Thyroid gland (tissue), 4 donors: ENCODE measurements at regions of chr7 and their contacts with region 1.

Region 1: GRCh38 chr7:135795846-135796570 is 47.4 kb upstream of the FAM180A start:
- DNase-seq: no peak
- H3K4me3 ChIP-seq: no peak overlapping the region
- H3K27ac ChIP-seq: peak overlapping the region; percentile 27 to 66 (median 51)
- H3K4me1 ChIP-seq: peaks cover 19 to 34% of the 10 kb centered on the region in 2 donors
- H3K27me3 ChIP-seq: no peaks in the 10 kb centered on the region
- CTCF ChIP-seq: no peak
- POLR2A ChIP-seq: no peak

Region 2: DNA sequence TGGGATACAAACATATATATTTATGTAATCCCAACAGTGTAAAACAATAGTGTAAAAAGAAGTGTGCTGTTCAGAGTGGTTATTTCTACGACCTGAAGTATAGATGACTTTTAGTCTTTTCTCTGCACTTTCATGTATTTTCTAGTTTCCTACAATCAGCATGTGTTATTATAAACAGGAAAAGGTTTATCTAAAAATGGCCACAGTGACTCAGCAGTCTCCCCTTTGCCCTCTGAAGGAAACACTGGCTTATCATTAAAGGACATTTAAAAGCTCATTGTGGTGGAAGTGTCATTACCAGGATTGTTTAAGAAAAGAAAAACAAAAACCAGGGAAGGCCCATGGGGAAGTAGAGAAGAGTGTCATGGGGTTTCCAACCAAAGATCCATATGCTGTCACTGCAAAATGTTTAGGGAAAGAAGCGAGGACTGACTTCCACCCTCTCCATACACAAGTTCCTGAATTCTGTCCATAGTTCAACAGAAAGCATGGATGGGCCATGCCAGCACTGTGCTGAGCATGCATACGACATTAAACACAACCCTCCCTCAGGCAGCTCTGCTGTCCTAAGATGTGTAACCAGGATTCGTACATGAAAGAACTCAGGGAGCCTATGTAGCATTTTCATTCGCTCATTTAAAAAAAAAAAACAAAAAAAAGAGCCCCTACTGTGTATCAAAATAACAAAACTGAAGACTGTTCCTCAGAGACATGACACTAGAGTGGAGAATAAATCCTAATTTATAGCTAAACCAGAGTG is 635.7 kb before region 1 on chr7:
- intact Hi-C with region 1: no loop called
- DNase-seq: no peak
- H3K4me3 ChIP-seq: no peak overlapping the region
- H3K27ac ChIP-seq: peak overlapping the region; percentile 6 to 58 (median 57)
- H3K4me1 ChIP-seq: peaks cover 0 to 41% of the 10 kb centered on the region in 2 donors
- H3K27me3 ChIP-seq: no peaks in the 10 kb centered on the region
- CTCF ChIP-seq: no peak
- POLR2A ChIP-seq: no peak

Region 3: DNA sequence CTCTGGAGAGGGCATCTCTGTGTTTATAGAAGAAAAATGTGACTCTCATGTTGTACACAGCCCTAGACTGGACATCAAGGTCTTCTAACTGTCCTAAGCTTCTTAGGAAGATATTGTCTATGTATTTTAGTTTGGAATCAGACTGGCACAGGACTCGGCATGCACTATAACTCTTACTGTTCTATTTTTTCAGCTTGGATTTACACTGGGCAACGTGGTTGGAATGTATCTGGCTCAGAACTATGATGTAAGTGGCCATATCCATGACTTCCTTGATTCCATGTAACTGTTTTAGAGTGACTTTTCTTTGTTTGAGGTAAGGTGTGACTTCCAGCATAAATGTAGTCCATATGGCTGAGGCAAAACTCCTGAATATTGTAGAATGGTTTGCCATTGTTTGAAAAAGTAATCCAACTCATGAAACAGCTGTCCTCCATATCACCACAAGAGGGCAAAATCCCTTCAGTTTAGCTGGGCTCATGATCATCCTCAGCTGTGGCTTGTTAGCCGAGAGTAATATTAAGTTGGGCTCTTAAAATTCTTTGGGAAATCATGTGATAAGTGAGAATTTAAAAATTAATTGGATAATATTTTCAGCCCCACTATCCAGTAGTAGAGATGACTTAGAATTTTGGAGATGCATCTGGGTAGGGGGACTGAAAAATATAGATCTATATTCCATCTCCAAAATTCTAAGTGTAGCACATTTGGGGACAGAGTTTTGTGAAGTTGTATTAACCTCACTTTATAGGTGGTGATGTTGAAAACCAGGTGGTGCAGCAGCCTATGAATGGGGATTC is 123.2 kb before region 1 on chr7:
- intact Hi-C with region 1: loop called (anchors 5 kb)
- DNase-seq: peak; percentile 27 to 34
- H3K4me3 ChIP-seq: no peak overlapping the region
- H3K27ac ChIP-seq: peak overlapping the region; percentile 16 to 62 (median 45)
- H3K4me1 ChIP-seq: peaks cover 33 to 41% of the 10 kb centered on the region in 2 donors
- H3K27me3 ChIP-seq: no peaks in the 10 kb centered on the region
- CTCF ChIP-seq: peak; percentile 58 to 91 (median 82)
- POLR2A ChIP-seq: no peak

Region 4: DNA sequence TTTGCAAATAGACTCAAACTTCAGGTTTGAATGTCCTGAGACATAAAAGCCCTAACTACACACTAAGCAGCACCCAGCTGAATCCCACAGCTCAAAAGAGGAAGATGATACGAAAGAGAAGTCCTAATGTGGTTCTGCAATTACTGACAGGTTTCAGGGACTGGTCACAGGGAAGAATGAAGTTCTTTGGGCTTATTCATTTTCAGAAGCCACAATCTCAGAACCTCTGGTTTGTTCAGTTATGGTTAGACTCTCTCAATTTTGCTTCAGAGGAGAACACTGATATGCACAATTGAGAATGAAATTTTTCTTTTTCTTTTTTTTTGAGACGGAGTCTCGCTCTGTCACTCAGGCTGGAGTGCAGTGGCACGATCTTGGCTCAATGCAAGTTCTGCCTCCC is 47.2 kb after region 1 on chr7:
- intact Hi-C with region 1: no loop called
- DNase-seq: no peak
- H3K4me3 ChIP-seq: no peak overlapping the region
- H3K27ac ChIP-seq: no peak overlapping the region
- H3K4me1 ChIP-seq: no peaks in the 10 kb centered on the region
- H3K27me3 ChIP-seq: no peaks in the 10 kb centered on the region
- CTCF ChIP-seq: no peak
- POLR2A ChIP-seq: no peak